Keratinocyte (primary cell): ENCODE measurements at regions of chr6 and their contacts with region 1.

Region 1: DNA sequence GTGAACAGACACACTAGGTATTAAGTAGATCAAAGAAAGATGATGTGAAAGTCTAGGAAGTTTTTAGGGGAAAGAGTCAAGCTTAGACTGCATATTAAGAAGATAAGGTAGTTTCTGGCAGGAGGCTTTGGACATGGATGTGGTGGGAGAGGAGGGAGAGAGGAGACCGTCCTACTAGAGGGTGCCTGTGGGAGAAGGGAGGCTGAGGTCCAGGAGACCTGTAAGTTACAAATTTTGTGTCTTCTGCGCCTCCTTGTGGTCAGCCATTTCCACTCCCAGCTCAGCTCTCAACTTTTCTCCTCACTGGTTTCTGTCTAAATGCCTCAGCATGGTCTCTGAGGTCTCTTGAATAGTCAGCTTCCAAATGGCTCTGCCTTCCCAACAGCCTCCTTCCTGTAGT is 193.5 kb downstream of the UNC5CL start:
- DNase-seq: no peak
- H3K4me3 ChIP-seq: no peak overlapping the region
- H3K27ac ChIP-seq: no peak overlapping the region
- H3K4me1 ChIP-seq: no peaks in the 10 kb centered on the region
- H3K27me3 ChIP-seq: peaks cover 16% of the 10 kb centered on the region
- CTCF ChIP-seq: peak; percentile 64 to 81 (median 69)

Region 2: GRCh38 chr6:40611912-40612311 is 233.6 kb before region 1 on chr6:
- dilution Hi-C with region 1: no loop called
- DNase-seq: no peak
- H3K4me3 ChIP-seq: no peak overlapping the region
- H3K27ac ChIP-seq: no peak overlapping the region
- H3K4me1 ChIP-seq: no peaks in the 10 kb centered on the region
- H3K27me3 ChIP-seq: no peaks in the 10 kb centered on the region
- CTCF ChIP-seq: no peak

Region 3: GRCh38 chr6:40788661-40789655 is 56.6 kb before region 1 on chr6:
- dilution Hi-C with region 1: loop called (anchors 10 kb)
- DNase-seq: no peak
- H3K4me3 ChIP-seq: no peak overlapping the region
- H3K27ac ChIP-seq: no peak overlapping the region
- H3K4me1 ChIP-seq: no peaks in the 10 kb centered on the region
- H3K27me3 ChIP-seq: no peaks in the 10 kb centered on the region
- CTCF ChIP-seq: no peak

Region 4: DNA sequence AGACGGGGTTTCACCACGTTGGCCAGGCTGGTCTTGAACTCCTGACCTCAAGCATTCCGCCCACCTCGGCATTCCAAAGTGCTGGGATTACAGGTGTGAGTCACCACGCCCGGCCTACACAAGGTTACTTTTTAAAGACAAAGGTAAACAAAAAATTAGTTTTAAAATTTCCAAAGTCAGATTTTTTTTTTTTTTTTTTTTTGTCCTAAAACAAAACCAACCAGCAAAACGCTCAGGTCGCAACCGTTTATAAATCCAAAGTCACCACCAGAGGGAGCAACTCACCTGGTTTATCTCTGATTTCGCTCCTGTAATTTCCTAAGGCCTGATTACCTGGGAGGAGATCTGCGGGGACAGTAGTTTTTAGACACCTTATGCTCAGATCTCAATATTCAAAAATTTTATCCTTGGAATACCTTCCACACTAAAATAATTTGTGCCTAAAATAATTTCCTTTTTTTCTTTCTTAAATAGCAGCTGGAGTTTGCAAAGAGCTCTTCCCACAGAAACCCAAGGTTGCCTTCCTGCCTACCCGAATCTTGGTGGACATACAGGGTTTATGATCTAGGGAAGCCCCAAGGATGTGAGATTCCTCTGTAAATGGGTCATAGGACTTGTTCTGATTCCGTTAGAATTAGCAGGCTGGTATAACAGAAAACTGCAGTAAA is 460.8 kb after region 1 on chr6:
- dilution Hi-C with region 1: no loop called
- DNase-seq: no peak
- H3K4me3 ChIP-seq: no peak overlapping the region
- H3K27ac ChIP-seq: no peak overlapping the region
- H3K4me1 ChIP-seq: no peaks in the 10 kb centered on the region
- H3K27me3 ChIP-seq: peaks cover 18% of the 10 kb centered on the region
- CTCF ChIP-seq: peak; percentile 41 to 53 (median 52)